A673 (cell line): ENCODE measurements at regions of chr12 and their contacts with region 1.

Region 1: DNA sequence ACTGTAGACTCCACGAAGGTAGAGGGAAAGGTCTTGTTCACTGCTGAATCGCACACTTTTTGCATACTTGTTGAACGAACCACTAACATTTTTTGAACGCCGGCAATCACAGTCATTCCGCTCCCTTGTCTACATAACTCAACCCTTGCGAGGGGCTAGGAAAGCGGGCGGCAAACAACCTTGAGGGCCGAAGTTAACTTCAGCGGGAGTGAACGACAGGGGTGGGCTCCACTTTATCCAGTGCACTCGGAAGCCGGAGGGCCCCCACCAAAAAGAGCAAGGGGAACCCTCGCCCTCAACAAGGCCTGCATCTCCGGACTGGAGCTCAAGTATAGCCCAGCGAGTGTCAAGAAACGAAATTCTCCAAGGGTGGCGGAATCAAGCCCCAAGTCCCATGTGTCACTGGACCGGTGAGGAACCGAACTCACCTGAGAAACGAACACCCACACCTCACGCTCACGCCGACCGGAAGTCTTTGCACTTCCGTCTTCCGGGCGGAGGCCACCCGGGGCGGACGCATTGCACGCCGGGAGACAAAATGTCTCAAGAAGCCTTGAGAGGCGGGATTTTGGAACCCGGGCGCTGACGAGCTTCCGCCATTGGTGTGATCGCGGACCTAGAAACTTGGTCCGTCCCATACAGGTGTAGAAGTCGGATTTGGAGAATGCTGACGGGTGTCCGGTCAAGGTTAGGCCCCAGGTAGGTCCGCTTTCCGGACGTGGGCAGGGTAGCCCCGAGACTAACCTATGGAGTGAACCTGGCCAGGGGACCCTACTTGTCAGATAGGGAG is at the start of gene LLPH:
- DNase-seq: peak; percentile 95
- H3K4me3 ChIP-seq: peak within 1 kb of the TSS; percentile 88
- H3K27ac ChIP-seq: peak within 1 kb of the TSS; percentile 76
- H3K4me1 ChIP-seq: peaks cover 10% of the 10 kb centered on the region
- H3K27me3 ChIP-seq: no peaks in the 10 kb centered on the region
- CTCF ChIP-seq: no peak
- total RNA-seq, gene LLPH: 49.5 and 51.3 TPM in 2 replicates

Region 2: GRCh38 chr12:65818454-65819382 is 311.8 kb before region 1 on chr12:
- CTCF ChIA-PET with region 1: no interaction called
- POLR2A ChIA-PET with region 1: no interaction called
- intact Hi-C with region 1: no loop called
- DNase-seq: no peak
- H3K4me3 ChIP-seq: no peak overlapping the region
- H3K27ac ChIP-seq: no peak overlapping the region
- H3K4me1 ChIP-seq: peaks cover 34% of the 10 kb centered on the region
- H3K27me3 ChIP-seq: no peaks in the 10 kb centered on the region
- CTCF ChIP-seq: no peak

Region 3: DNA sequence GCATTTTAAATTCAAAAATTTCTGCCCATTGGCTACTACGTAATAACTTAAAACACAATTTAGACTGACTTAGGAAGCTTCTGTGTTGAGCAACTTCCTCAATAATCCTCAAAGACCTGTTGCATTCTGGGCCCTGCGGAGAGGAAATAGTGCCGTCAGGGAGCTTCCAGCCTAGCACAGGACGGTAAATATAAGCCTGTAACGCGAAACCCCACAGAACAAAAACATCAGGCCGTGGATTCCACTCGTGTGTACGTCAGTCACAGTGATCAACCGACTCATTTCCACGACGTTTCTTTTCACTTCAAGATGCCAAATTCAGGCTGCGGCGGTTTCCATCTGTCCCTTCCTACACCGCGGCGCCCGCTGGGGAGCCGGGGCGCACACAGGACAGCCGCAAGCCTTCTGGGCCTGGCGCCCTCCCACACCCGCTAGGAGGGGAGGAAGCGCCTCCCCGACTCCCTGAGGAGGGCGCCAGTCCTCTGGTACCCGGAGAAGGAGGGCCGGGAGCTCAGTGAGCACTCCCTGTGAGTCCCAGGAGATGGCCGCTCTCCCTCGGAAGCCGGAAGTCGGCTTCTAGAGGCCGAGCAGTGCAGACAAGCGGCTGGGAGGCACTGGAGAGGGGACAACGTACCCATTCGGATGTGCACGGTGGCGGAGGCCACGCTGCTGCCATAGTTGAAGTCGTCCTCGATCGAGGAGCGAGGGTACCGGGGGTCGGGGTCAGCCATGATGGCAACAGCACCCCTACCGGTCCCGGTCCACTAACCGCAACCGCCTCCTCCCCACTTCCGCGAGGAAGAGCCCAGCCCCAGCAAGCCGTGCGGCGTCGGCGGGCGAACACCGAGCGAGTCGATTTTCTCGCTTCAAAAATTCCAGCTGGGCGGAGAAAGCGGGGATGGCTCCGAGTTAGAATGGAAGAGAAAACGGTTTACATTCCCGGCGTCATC is 39.0 kb after region 1 on chr12 and contains the start of gene TMBIM4:
- CTCF ChIA-PET with region 1: interaction called, 11 read pairs
- POLR2A ChIA-PET with region 1: no interaction called
- intact Hi-C with region 1: no loop called
- DNase-seq: peak; percentile 98
- H3K4me3 ChIP-seq: peak within 1 kb of the TSS; percentile 71
- H3K27ac ChIP-seq: peak within 1 kb of the TSS; percentile 97
- H3K4me1 ChIP-seq: peaks cover 9% of the 10 kb centered on the region
- H3K27me3 ChIP-seq: no peaks in the 10 kb centered on the region
- CTCF ChIP-seq: peak; percentile 58
- total RNA-seq, gene TMBIM4: 61.8 and 62.1 TPM in 2 replicates